Motor neuron (in vitro differentiated cells): ENCODE measurements at regions of chr10 and their contacts with region 1.

Region 1: GRCh38 chr10:62038609-62039190 is 137.2 kb downstream of the ARID5B start:
- ATAC-seq: peak; percentile 20 to 63 (median 50)
- H3K4me3 ChIP-seq: no peak overlapping the region
- H3K27ac ChIP-seq: no peak overlapping the region
- H3K4me1 ChIP-seq: peaks cover 25 to 43% of the 10 kb centered on the region in 2 donors

Region 2: GRCh38 chr10:61903221-61903927 is 135.3 kb before region 1 on chr10:
- in situ Hi-C with region 1: loop called in 1 of 9 experiments (anchors 25 kb)
- ATAC-seq: peak; percentile 23 to 71 (median 64)
- H3K4me3 ChIP-seq: peak overlapping the region; percentile 63 to 92 (median 86)
- H3K27ac ChIP-seq: peak overlapping the region; percentile 1 to 50
- H3K4me1 ChIP-seq: peaks cover 5 to 27% of the 10 kb centered on the region in 2 donors

Region 3: DNA sequence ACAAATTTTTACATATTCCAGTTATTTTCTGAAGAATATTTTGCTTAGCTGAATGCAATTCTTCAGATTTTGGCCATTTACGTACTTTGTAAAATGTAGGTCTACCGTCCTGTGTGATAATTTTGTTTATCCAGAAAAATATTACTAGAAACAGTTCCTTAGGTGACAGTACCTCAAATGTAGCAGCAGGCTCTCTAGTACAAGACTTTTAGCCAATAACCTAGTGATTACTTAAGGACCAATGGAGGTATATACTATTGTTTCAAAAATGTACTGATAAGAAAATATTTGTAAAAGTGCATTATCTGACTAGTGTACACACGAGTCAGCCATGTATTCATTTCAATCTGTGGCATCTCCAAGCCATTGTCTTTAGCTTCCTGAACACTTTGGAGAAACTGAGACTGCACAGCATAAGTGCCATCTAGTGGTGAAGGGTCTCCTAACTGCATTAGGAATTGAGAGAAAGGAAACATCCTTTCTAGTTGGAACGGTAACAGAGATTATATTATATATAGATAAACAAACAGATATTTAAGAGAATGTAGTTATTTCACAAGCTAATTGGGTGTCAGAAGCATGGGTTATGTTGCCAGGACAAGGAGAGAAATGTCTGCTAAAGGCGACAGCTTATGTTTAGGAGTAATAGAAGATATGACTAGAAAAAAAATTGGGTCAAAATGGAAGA is 206.2 kb after region 1 on chr10:
- in situ Hi-C with region 1: loop called in 4 of 9 experiments (anchors 25 kb)
- ATAC-seq: peak; percentile 62 to 88 (median 72)
- H3K4me3 ChIP-seq: no peak overlapping the region
- H3K27ac ChIP-seq: no peak overlapping the region
- H3K4me1 ChIP-seq: peaks cover 0 to 4% of the 10 kb centered on the region in 2 donors

Region 4: DNA sequence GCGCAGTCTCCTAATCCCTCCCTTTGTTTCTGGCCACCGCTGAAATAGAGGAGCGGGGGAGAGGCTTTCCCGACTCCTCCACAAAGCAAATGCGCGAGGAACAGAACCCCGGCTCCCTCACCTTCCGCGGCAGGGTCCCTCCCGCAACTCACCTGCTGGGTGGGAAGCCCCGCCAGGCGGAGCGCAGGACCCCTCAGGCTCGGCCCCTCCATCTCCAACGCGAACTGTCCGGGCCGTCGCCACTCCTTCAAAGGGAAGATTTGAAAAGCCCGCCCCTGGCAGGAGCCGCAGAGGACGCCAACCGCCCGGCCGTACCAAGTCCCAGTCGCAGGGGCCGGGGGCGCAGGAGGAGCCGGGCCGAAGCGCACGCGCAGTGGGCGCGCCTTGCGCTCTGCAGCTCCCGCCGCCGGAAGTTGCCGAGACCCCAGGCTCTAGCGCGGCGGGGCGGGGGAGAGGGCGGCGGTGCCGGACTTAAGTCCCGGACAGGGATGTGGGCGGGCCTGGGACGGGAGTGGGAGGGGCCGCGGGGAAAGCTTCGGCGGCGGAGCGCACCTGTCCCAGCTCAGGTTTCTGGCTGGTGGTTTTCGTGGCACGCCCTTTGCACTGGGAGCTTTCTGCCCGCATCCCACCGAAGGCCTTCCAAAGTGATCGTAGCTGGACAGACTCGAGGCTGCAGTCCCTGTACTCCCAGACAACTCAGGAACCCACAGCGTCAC is 229.9 kb after region 1 on chr10 and contains the start of gene RTKN2:
- in situ Hi-C with region 1: loop called in 1 of 9 experiments (anchors 25 kb)
- ATAC-seq: peak; percentile 83 to 96 (median 94)
- H3K4me3 ChIP-seq: peak within 1 kb of the TSS; percentile 45 to 72 (median 63)
- H3K27ac ChIP-seq: no peak within 1 kb of the TSS
- H3K4me1 ChIP-seq: peaks cover 10 to 14% of the 10 kb centered on the region in 2 donors
- total RNA-seq, gene RTKN2: 0.05 to 12.6 (median 0.91) TPM